ENCODE measurements at regions of chr10 and their contacts with region 1.

Region 1: GRCh38 chr10:93816123-93816747 is 58.5 kb downstream of the LGI1 start:
- DNase-seq: peak; percentile 74
- ATAC-seq: peak; percentile 83

Region 2: DNA sequence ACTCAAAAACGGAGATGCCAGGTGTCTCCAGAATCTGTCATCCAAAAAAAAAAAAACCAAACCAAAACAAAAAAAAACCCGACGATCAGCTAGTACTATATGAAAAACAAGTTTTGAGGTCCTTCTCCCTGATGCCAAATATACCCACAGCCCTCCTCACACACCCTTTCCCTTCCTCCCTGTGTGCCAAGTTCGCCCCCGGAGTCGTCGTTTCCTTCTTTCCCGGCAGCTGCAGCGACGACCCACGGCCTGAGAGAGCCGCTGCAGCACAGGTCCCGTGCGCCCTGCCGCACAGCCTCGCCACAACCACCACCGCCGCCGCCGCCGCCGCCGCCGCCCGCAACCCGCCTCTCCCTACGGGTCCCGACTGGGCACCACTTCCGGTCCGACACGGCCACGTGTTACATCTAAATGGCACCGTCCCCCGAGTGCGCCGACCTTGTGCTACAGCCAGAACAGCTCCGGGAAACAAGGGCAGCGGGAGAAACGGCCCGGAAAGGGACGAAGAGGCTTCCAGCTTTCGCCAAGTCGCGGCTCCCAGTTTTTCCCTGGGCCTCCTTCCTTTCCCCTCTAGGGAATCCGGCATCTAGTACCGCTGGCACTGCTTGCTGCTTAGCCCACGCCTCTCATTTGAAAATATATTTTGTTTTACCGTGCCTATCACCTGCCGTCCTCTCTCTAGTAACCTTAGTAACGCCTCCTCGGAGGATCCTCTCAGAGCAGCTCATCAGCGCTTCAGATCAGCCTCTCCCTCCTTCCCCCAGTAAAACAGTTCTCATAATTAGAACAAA is 113.8 kb before region 1 on chr10 and contains the start of gene FRA10AC1:
- intact Hi-C with region 1: loop called (anchors 10 kb)
- DNase-seq: peak; percentile 95
- ATAC-seq: peak; percentile 99
- total RNA-seq, gene FRA10AC1: 11.9 TPM

Measured in Right ventricle myocardium superior (tissue), 1 donor.